ENCODE measurements at regions of chr6 and their contacts with region 1.

Region 1: GRCh38 chr6:14889611-14890593 is 356.0 kb upstream of the JARID2 start:
- DNase-seq: no peak
- H3K4me3 ChIP-seq: no peak overlapping the region
- CTCF ChIP-seq: no peak

Region 2: GRCh38 chr6:14953836-14954235 is 63.9 kb after region 1 on chr6:
- in situ Hi-C with region 1: loop called (anchors 10 kb)
- DNase-seq: no peak
- H3K4me3 ChIP-seq: no peak overlapping the region
- CTCF ChIP-seq: no peak